Transverse colon (tissue), 4 donors: ENCODE measurements at regions of chr1 and their contacts with region 1.

Region 1: DNA sequence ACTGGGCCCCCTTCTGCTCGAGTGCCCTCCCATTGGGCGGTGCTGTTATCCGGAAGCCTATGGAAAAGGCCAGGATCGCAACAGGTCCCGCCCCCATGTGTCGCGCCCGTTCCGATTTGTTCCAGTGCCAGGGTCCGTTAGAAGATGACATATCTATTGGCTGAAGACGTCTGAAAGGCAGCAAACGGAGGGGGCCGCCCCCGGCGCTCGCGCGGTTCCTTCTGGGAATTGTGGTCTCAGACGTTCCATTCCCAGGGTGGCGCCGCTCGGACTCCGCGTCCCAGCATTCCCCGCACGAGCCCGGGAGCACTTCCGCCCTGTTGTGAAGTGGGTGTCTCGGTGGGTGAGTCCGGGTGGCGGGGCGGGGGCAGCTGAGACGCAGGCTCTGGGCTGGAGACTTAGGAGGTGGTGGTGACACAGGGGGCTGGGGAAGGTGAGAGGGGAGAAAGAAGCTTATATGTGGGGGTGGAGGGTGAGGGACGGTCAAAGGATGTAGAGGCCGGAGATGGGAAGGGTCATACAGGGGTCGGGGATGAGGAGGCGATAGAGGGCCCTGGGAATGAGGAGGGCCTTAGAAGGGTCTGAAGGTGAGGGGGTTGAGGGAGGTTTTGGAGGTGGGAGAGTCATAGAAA is at the start of gene ZSCAN20:
- DNase-seq: peak; percentile 98
- H3K4me3 ChIP-seq: peak within 1 kb of the TSS; percentile 55 to 83 (median 72)
- H3K27ac ChIP-seq: peak within 1 kb of the TSS; percentile 69 to 88 (median 84)
- H3K4me1 ChIP-seq: peaks cover 5 to 30% (median 15%) of the 10 kb centered on the region in 4 donors
- H3K27me3 ChIP-seq: no peaks in the 10 kb centered on the region
- CTCF ChIP-seq: no peak
- EP300 ChIP-seq: no peak
- POLR2A ChIP-seq: peak; percentile 47
- total RNA-seq, gene ZSCAN20: 3.7 to 5.7 (median 4.7) TPM

Region 2: DNA sequence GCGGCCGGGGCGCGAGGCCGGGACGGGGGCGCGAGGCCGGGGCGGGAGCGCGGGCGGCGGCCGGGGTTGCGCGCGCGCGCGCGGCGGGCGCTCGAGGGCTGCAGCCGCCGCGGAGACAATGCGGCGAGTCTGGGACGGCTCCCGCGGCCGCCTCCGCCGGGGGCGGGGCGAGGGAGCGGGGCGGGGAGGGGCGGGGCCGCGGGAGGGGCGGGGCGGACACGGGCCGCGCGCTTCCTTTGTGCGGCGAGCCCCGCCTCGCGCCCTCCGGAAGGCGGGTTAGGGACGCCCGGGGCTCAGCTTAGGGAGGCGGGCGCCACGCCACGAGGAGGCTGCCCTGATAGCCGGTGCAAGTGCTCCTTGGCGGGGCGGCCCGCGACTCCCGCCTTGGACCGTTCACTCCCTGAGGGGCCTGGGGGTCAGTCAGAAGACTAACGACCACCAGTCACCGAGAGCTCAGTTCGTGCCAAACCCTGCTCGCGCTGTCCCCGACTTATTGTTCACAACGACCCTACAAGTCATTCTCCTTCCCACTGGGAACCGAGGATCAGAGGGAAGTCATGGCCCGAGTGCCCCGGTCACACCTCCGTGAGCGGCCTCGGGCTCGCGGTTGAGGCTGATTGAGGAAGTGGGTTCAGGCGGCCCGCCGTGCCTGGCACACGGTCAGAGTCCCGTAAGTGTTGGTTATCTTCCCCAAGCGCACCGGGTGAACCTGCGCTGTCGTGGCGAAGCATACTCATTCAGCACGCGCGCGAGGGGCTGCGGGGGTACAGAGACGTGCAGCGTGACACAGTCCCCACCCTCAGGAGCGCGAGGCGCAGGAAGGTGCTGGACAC is 122.5 kb before region 1 on chr1:
- in situ Hi-C with region 1: loop called in 1 of 4 experiments (anchors 25 kb)
- intact Hi-C with region 1: no loop called
- DNase-seq: peak; percentile 89
- H3K4me3 ChIP-seq: peak overlapping the region; percentile 61 to 96 (median 76)
- H3K27ac ChIP-seq: peak overlapping the region; percentile 95 to 99 (median 98)
- H3K4me1 ChIP-seq: peaks cover 11 to 42% (median 42%) of the 10 kb centered on the region in 4 donors
- H3K27me3 ChIP-seq: no peaks in the 10 kb centered on the region
- CTCF ChIP-seq: no peak
- EP300 ChIP-seq: no peak
- POLR2A ChIP-seq: peak; percentile 66